OCI-LY7 (cell line): ENCODE measurements at regions of chr7 and their contacts with region 1.

Region 1: DNA sequence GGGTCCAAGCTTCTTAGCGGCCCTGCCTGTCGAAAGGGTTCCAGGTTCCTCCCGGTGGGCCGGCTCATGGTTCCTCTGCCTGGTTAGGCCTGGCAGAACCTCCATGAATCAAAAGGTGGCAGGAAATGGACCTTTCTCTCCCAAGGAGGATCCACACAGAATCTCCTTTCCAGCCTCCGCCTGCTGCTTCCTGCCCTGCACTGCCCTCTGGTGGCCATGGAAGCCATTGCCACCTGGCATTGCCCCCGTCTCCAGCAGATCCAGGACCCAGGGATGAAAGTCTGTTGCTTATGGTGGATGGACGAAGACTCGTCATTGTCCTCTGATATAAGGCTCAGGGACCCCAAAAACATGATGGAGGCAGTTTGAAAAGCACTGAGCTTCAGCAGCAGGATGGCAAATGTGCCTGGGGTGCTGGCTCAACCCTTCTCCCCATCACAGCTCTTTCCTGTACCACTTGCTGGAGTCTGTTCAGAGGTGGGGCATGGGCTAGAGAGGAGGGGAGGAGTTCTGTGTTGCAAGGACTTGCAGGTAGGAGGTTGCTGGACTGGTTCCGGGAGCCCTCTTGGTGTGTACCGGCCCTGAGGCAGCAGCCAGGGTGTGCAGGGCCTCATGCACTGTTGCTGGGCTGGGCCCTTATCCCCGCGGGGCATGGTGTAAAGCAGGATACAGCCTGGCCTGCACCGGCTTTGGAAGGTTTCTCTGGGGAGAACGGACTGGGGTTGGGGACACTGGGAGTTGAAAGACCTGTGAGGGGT is 11.3 kb upstream of the INMT start:
- DNase-seq: peak; percentile 60
- H3K4me3 ChIP-seq: no peak overlapping the region
- H3K27ac ChIP-seq: no peak overlapping the region
- H3K4me1 ChIP-seq: no peaks in the 10 kb centered on the region
- CTCF ChIP-seq: peak; percentile 98

Region 2: GRCh38 chr7:30510124-30511075 is 230.2 kb before region 1 on chr7:
- CTCF ChIA-PET with region 1: no interaction called
- POLR2A ChIA-PET with region 1: no interaction called
- intact Hi-C with region 1: loop called (anchors 2 kb)
- DNase-seq: peak; percentile 57
- H3K4me3 ChIP-seq: no peak overlapping the region
- H3K27ac ChIP-seq: no peak overlapping the region
- H3K4me1 ChIP-seq: peaks cover under 1% of the 10 kb centered on the region
- CTCF ChIP-seq: peak; percentile 99

Region 3: GRCh38 chr7:30548762-30549344 is 191.8 kb before region 1 on chr7:
- CTCF ChIA-PET with region 1: interaction called, 4 read pairs
- POLR2A ChIA-PET with region 1: interaction called, 5 read pairs
- intact Hi-C with region 1: loop called (anchors 5 kb)
- DNase-seq: peak; percentile 61
- H3K4me3 ChIP-seq: no peak overlapping the region
- H3K27ac ChIP-seq: no peak overlapping the region
- H3K4me1 ChIP-seq: peaks cover 43% of the 10 kb centered on the region
- CTCF ChIP-seq: peak; percentile 91

Region 4: GRCh38 chr7:30630986-30631385 is 109.6 kb before region 1 on chr7:
- CTCF ChIA-PET with region 1: no interaction called
- POLR2A ChIA-PET with region 1: no interaction called
- intact Hi-C with region 1: loop called (anchors 10 kb)
- DNase-seq: peak; percentile 51
- H3K4me3 ChIP-seq: no peak overlapping the region
- H3K27ac ChIP-seq: peak overlapping the region; percentile 60
- H3K4me1 ChIP-seq: peaks cover 17% of the 10 kb centered on the region
- CTCF ChIP-seq: no peak

Region 5: GRCh38 chr7:30671793-30672465 is 68.7 kb before region 1 on chr7:
- CTCF ChIA-PET with region 1: interaction called, 11 read pairs
- POLR2A ChIA-PET with region 1: no interaction called
- intact Hi-C with region 1: no loop called
- DNase-seq: peak; percentile 33
- H3K4me3 ChIP-seq: no peak overlapping the region
- H3K27ac ChIP-seq: no peak overlapping the region
- H3K4me1 ChIP-seq: no peaks in the 10 kb centered on the region
- CTCF ChIP-seq: no peak

Region 6: DNA sequence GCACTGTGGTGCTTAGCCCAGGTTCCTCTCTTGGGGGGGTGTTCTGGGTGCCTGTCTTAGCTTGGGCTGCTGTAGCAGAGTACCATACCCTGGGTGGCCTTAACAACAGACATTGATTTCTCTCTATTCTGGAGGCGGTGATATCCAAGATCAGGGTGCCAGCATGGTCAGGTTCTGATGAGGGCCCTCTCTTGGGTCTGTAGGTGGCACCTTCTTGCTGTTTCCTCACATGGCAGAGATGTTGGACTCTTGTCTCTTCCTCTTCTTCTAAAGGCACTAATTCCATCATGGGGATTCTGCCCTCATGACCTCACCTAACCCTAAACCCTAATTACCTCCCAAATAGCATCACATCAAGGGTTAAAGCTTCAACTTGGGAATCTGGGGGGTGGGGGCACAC is 38.4 kb before region 1 on chr7:
- CTCF ChIA-PET with region 1: no interaction called
- POLR2A ChIA-PET with region 1: interaction called, 4 read pairs
- intact Hi-C with region 1: loop called (anchors 1 kb)
- DNase-seq: peak; percentile 30
- H3K4me3 ChIP-seq: no peak overlapping the region
- H3K27ac ChIP-seq: no peak overlapping the region
- H3K4me1 ChIP-seq: no peaks in the 10 kb centered on the region
- CTCF ChIP-seq: peak; percentile 71

Region 7: GRCh38 chr7:30938435-30939316 is 198.1 kb after region 1 on chr7:
- CTCF ChIA-PET with region 1: no interaction called
- POLR2A ChIA-PET with region 1: no interaction called
- intact Hi-C with region 1: no loop called
- DNase-seq: peak; percentile 67
- H3K4me3 ChIP-seq: no peak overlapping the region
- H3K27ac ChIP-seq: no peak overlapping the region
- H3K4me1 ChIP-seq: no peaks in the 10 kb centered on the region
- CTCF ChIP-seq: peak; percentile 87